PC-9 (cell line): ENCODE measurements at regions of chr13 and their contacts with region 1.

Region 1: DNA sequence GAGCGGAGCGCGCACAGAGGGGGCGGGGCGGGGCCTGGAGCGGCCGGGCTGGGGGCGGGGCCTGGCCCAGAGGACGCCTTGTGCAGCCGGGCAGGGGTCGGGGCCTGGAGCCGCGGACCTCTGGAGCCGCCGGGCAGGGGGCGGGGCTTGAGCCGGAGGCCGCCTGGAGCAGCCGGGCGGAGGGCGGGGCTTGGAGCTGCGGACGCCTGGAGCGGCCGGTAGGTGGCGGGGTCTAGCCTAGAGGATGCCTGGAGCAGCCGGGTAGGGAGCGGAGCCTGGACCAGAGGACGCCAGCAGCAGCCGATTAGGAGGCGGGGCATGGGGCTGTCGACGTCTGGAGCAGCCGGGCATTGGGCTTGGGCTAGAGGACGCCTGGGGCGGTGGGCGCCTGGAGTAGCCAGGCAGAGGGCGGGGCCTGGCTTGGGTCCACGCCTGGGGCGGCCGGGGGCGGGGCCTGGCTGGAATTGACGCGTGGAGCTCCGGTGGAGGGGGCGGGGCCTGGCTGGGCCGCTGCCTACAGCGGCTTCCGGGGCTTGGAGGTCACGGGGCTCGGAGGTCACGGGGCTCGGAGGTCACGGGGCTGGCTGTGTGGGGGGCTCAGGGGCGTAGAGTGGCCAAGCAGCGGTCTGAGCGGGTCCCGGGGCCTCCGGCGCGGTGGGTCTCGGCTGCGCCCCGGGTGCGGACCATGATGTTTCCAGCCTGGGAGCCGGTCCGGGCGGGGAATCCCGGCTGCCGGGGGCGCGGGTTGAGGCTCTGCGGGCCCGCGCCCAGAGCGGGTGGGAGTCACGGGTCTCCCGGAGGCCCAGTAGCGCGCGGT is at the start of gene ANKRD10:
- DNase-seq: peak; percentile 98 to 100
- H3K4me3 ChIP-seq: peak within 1 kb of the TSS; percentile 82
- H3K27ac ChIP-seq: peak within 1 kb of the TSS; percentile 89
- H3K4me1 ChIP-seq: peaks cover 34% of the 10 kb centered on the region
- H3K27me3 ChIP-seq: no peaks in the 10 kb centered on the region
- CTCF ChIP-seq: peak; percentile 81
- total RNA-seq, gene ANKRD10: 154 and 155 TPM in 2 replicates

Region 2: GRCh38 chr13:110615322-110616102 is 299.8 kb before region 1 on chr13 and contains the start of gene NAXD:
- CTCF ChIA-PET with region 1: no interaction called
- POLR2A ChIA-PET with region 1: no interaction called
- intact Hi-C with region 1: loop called (anchors 5 kb)
- DNase-seq: peak; percentile 88 to 89
- H3K4me3 ChIP-seq: peak within 1 kb of the TSS; percentile 90
- H3K27ac ChIP-seq: peak within 1 kb of the TSS; percentile 65
- H3K4me1 ChIP-seq: peaks cover 28% of the 10 kb centered on the region
- H3K27me3 ChIP-seq: no peaks in the 10 kb centered on the region
- CTCF ChIP-seq: peak; percentile 7; the same call in 1 of the 2 replicates
- total RNA-seq, gene NAXD: 30.2 and 35.2 TPM in 2 replicates

Region 3: DNA sequence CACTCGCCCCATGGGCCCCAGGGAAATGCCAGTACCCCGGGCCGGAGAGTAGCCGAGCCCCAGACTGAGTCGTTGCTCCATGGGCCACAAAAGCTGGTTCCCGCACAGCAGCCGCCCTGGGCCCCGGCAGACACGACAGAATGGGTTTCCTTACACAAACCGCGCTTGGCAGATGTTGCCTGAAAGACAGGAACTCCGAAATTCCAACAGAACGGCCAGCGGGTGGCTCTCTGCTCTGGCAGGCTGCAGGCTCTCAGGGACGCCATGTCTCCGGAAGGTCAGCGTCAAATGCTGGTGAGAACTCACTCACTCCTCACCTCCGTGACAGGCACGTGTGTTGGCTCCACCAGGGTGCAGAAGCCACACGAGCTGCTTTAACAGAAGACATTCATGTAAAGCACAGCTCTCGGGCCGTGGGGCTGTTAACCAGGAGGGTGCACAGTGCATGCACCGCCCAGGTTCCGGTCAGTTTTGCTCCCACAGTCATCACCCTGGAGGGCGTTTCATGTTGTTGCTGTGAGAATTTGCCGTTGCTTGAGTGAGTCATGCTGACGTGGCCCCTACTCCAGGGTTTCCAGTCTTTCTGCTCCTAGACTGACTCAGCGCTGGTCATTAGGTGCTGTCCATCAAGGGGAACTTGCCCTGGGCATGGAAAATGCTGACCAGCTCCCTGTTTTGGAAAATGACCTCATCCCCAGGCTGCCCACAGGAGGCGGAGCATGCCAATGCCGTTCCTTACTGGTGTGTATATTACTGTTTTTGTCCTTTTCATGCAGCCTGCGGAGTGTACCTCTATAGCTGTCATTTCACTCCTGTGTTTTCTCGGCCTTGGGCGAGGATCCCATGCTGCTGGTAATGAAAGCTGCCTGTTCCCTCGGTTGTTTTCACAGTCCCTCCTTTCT is 45.2 kb before region 1 on chr13:
- CTCF ChIA-PET with region 1: interaction called, 4 read pairs
- POLR2A ChIA-PET with region 1: interaction called, 10 read pairs
- intact Hi-C with region 1: loop called (anchors 1 kb)
- DNase-seq: peak; percentile 96 to 99
- H3K4me3 ChIP-seq: peak overlapping the region; percentile 65
- H3K27ac ChIP-seq: peak overlapping the region; percentile 97
- H3K4me1 ChIP-seq: peaks cover 28% of the 10 kb centered on the region
- H3K27me3 ChIP-seq: no peaks in the 10 kb centered on the region
- CTCF ChIP-seq: no peak

Region 4: GRCh38 chr13:110965038-110965754 is 49.9 kb after region 1 on chr13:
- CTCF ChIA-PET with region 1: no interaction called
- POLR2A ChIA-PET with region 1: interaction called, 3 read pairs
- intact Hi-C with region 1: loop called (anchors 2 kb)
- DNase-seq: peak; percentile 50 to 94
- H3K4me3 ChIP-seq: no peak overlapping the region
- H3K27ac ChIP-seq: peak overlapping the region; percentile 77
- H3K4me1 ChIP-seq: peaks cover 27% of the 10 kb centered on the region
- H3K27me3 ChIP-seq: no peaks in the 10 kb centered on the region
- CTCF ChIP-seq: peak; percentile 21; the same call in 1 of the 2 replicates

Region 5: DNA sequence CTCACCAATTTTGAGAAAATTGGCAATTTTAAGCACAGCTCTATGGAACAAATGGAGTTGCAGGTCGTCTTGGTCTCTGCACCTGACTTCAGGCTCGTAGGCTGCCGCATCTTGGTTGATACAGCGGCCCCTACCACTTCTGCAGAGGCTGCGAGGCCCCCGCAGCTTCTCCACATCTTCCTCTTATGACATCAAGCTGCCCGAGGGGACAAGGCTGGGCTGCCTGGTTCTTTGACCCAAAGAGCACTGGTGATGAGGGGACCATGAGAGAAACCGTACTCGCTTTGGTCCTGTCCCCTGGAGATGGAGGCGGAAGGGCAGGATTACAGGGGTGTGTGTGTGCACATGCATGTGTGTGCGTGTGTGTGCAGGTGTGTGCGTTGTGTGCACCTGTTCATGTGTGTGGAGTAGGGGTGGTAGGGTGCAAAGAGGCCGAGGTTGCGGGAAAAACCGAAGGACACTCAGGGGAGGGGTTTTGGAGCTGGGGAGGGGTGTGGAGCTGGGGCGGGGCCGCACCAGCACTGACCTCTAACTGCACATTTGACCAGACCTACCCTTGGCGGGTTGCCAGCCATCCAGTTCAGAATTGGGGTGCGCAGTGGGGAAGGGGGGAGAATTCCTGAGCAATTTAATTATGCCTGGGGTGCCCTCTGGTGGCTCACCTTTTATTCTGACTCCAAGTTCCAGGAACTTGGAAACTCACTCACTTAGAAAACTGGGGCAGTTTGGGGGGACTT is 134.7 kb after region 1 on chr13:
- CTCF ChIA-PET with region 1: no interaction called
- POLR2A ChIA-PET with region 1: no interaction called
- intact Hi-C with region 1: loop called (anchors 1 kb)
- DNase-seq: peak in 1 of 2 experiments; percentile 32
- H3K4me3 ChIP-seq: no peak overlapping the region
- H3K27ac ChIP-seq: no peak overlapping the region
- H3K4me1 ChIP-seq: no peaks in the 10 kb centered on the region
- H3K27me3 ChIP-seq: no peaks in the 10 kb centered on the region
- CTCF ChIP-seq: peak; percentile 80

Region 6: DNA sequence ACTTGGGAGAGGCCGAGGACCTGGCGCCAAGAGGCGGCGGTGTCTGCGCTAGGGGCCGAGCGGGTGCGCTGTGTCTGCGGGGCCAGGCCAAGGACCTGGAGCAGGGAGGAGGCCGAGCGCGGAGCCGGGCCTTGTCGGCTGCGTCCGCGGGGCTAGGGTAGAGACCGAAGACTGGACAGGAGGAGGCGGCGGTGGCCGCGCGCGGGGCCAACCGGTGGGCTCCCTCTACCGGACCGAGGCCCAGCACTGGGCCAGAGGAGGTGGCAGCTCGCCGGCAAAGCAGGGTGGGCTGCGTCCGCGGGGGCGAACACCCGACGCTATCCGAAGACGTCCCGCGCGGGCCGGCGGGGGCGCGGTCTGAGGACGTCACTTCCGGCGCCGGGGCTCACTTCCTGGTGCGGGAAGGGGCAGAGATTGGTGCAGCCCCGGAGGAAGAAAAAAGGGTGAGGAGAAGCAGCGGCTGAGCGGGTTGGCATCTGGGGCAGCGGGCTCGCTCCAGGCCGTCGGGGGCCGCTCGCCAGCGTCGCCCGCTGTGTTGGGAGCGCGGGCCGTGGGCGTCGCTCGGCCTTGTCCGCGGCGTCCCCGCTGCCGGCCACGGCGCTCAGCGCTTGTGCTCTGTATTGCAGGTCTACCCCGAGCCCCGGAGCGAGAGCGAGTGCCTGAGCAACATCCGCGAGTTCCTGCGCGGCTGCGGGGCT is 238.2 kb after region 1 on chr13:
- CTCF ChIA-PET with region 1: no interaction called
- POLR2A ChIA-PET with region 1: no interaction called
- intact Hi-C with region 1: loop called (anchors 1 kb)
- DNase-seq: peak; percentile 83 to 87
- H3K4me3 ChIP-seq: peak overlapping the region; percentile 89
- H3K27ac ChIP-seq: peak overlapping the region; percentile 79
- H3K4me1 ChIP-seq: peaks cover 17% of the 10 kb centered on the region
- H3K27me3 ChIP-seq: peaks cover 22% of the 10 kb centered on the region
- CTCF ChIP-seq: no peak